Psoas muscle (tissue), 8 donors: ENCODE measurements at regions of chr17 and their contacts with region 1.

Region 1: GRCh38 chr17:7794075-7794663 is 39.8 kb upstream of the KDM6B start:
- DNase-seq: no peak
- ATAC-seq: no peak
- H3K4me3 ChIP-seq: no peak overlapping the region
- H3K27ac ChIP-seq: no peak overlapping the region
- H3K4me1 ChIP-seq: no peaks in the 10 kb centered on the region
- H3K27me3 ChIP-seq: peaks cover 0 to 6% (median 0%) of the 10 kb centered on the region in 3 donors
- CTCF ChIP-seq: no peak

Region 2: DNA sequence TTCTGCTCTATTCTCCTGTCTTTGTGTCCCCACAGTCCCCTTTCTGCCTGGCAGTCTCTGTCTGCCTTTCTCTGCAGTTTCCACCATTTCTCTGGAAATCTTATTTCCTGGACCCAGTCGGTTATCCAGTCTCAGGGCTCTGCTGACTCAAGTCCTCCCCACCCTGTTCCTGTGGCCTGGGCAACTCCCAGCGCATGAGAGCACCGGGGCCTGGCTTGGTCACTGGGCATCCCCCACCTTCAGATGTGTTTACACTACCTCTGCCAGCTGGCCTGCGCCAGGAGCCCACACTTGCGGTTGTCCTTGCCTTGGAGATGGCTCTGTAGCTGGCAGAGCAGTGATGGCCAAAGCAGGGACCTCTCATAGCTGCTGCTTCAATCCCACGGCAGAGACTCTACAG is 225.5 kb after region 1 on chr17:
- intact Hi-C with region 1: loop called in 1 of 2 experiments (anchors 10 kb)
- DNase-seq: no peak
- ATAC-seq: no peak
- H3K4me3 ChIP-seq: no peak overlapping the region
- H3K27ac ChIP-seq: no peak overlapping the region
- H3K4me1 ChIP-seq: peaks cover 5% of the 10 kb centered on the region
- H3K27me3 ChIP-seq: peaks cover 0 to 18% (median 8%) of the 10 kb centered on the region in 3 donors
- CTCF ChIP-seq: no peak